Right cardiac atrium (tissue), 5 donors: ENCODE measurements at regions of chr16 and their contacts with region 1.

Region 1: GRCh38 chr16:75622761-75623605 is at the start of gene ADAT1:
- DNase-seq: peak; percentile 99 to 100 (median 99)
- ATAC-seq: peak; percentile 97
- H3K4me3 ChIP-seq: peak within 1 kb of the TSS; percentile 61
- H3K27ac ChIP-seq: peak within 1 kb of the TSS; percentile 96
- H3K4me1 ChIP-seq: peaks cover 7% of the 10 kb centered on the region
- H3K27me3 ChIP-seq: no peaks in the 10 kb centered on the region
- total RNA-seq, gene ADAT1: 17.8 to 27.2 (median 22.4) TPM

Region 2: DNA sequence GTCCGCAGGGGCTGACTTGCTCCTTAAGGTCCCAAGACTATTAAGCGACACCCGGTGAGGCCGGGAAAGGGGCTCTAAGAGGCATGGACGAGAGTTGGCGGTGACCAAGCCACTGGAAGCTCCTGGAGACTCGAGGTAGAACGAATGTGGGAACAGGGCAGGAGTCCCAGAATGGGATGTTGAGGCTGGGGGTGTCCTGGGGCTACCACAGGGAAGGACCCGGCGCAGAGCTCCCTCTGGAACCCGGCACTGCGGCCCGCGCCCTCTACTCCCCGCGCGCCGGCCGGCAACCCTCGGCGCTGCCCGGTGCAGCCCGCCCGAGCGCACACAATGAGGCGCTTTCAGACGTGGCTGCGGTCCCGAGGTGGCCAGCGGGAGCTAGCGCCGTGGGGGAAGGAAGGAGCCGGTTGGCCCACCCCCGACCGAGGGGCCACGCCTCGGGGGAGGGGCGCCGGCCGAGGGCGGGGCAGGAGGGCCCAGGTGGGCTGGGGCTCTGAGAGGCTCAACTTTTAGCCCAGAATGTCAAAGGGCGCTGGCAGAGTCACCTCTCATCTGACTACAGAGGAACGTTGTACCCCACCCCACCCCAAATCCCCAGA is 127.8 kb before region 1 on chr16 and contains the start of gene CHST6:
- intact Hi-C with region 1: no loop called
- DNase-seq: peak; percentile 73 to 85 (median 84)
- ATAC-seq: peak; percentile 82 to 90
- H3K4me3 ChIP-seq: peak within 1 kb of the TSS; percentile 14
- H3K27ac ChIP-seq: no peak within 1 kb of the TSS
- H3K4me1 ChIP-seq: no peaks in the 10 kb centered on the region
- H3K27me3 ChIP-seq: no peaks in the 10 kb centered on the region
- total RNA-seq, gene CHST6: 3.1 to 9.9 (median 4.3) TPM

Region 3: DNA sequence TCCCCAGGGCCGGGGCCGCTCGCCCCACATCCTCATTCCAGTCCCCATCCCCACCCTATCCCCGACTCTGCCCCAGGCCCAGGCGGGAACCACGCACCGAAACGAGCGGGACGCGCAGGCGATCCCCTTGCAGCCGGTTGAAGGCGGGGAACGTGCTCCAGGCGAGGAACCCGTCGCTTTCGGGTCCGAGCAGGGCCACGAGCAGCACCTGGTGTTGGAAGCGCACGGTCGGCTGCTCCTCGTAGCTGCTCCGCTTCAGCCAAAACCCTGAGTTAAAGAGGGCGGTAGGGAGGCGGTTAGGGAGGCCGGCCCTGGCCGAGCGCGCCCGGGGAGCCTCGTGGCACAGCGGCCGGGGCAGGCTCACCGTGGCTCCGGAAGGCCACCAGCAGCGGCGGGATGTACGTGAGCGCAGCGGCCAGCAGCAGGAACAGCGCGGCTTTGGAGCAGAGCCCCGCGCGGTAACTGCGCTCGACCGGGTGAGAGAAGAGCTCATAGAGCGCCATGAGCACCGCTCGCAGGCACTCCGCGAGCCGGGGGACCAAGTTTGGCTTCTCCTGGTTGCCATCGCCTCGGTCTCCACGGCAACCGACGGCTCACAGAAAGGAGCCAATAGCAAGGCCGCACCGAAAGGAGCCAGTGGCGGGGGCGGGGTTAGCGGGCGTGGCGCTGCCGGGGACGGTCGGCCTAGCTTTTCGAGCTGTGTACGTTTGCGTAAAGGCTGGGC is 67.1 kb before region 1 on chr16 and contains the start of gene TMEM231:
- intact Hi-C with region 1: loop called in 2 of 4 experiments (anchors 10 kb)
- DNase-seq: peak; percentile 99 to 100 (median 99)
- ATAC-seq: peak; percentile 98
- H3K4me3 ChIP-seq: peak within 1 kb of the TSS; percentile 69
- H3K27ac ChIP-seq: peak within 1 kb of the TSS; percentile 64
- H3K4me1 ChIP-seq: no peaks in the 10 kb centered on the region
- H3K27me3 ChIP-seq: no peaks in the 10 kb centered on the region
- total RNA-seq, gene TMEM231: 6.3 to 7.8 (median 6.8) TPM

Region 4: GRCh38 chr16:75566040-75566810 is 56.8 kb before region 1 on chr16 and contains the start of gene GABARAPL2:
- intact Hi-C with region 1: loop called in 1 of 4 experiments (anchors 10 kb)
- DNase-seq: peak; percentile 86 to 95 (median 93)
- ATAC-seq: peak; percentile 94
- H3K4me3 ChIP-seq: peak within 1 kb of the TSS; percentile 94
- H3K27ac ChIP-seq: peak within 1 kb of the TSS; percentile 91
- H3K4me1 ChIP-seq: peaks cover 17% of the 10 kb centered on the region
- H3K27me3 ChIP-seq: no peaks in the 10 kb centered on the region
- total RNA-seq, gene GABARAPL2: 197 to 245 (median 219) TPM

Region 5: GRCh38 chr16:75764154-75764768 is 141.3 kb after region 1 on chr16:
- intact Hi-C with region 1: loop called in 1 of 4 experiments (anchors 10 kb)
- DNase-seq: peak in 2 of 3 donors; percentile 18 to 55
- ATAC-seq: peak; percentile 91 to 92
- H3K4me3 ChIP-seq: no peak overlapping the region
- H3K27ac ChIP-seq: no peak overlapping the region
- H3K4me1 ChIP-seq: no peaks in the 10 kb centered on the region
- H3K27me3 ChIP-seq: no peaks in the 10 kb centered on the region